G401 (cell line): ENCODE measurements at regions of chr11 and their contacts with region 1.

Region 1: GRCh38 chr11:123116486-123116885 is 54.5 kb upstream of the HSPA8 start:
- DNase-seq: no peak

Region 2: DNA sequence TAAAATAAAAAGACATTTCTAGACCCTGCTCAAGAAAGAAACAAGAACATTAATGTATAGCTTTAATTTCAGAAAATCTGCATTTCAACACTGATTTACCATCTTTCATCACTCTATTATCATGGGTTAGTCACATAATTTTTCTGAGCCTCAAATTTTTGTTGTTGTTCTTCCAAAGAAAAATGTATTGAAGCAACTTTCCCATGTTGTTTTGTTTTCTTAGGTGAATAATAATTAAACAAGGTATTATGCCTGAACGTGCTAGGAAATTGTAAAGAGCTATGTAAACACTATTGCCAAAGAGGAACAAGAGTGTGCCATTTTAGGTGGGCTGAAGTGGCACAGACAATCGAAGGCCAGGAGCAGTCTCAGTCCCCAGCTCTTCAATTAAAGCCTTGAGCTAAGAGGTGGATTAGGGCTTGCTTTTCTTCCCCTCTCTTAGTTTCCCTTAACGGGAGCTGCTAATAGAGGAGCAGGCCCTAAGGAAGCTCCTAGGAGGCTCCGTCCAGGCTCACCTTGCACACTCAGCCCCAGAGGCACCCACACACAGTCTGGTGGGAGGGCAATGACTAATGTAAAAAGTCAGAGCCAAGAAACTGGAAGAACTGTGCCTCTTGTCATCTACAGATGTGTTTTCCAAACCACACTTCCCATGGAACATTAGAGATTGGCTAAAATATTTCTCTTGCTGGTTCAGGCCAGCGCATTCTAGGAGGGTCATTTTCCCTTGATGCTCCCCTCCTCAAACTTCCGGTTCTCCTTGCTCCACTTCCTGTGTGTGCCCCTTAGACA is 469.7 kb before region 1 on chr11:
- in situ Hi-C with region 1: no loop called
- DNase-seq: no peak

Region 3: DNA sequence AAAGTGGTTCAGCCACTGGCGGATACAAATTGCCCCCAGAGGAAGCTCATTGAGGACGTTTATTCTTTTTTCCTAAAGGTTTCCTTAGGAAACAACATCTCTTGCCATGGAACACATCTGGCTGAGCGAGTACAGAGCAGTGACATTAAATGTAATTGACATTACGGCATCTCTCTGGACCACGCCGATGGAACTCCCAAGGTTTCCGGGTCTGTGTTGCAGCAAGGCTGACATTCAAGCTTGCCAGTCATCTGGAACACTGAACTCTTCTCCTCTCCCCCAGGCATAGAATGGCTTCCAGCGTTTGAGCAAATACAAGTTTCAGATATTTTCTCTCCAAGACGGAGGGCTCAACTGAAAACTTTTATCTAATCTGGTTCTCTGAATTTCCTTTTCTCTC is 36.5 kb after region 1 on chr11:
- in situ Hi-C with region 1: no loop called
- DNase-seq: no peak

Region 4: DNA sequence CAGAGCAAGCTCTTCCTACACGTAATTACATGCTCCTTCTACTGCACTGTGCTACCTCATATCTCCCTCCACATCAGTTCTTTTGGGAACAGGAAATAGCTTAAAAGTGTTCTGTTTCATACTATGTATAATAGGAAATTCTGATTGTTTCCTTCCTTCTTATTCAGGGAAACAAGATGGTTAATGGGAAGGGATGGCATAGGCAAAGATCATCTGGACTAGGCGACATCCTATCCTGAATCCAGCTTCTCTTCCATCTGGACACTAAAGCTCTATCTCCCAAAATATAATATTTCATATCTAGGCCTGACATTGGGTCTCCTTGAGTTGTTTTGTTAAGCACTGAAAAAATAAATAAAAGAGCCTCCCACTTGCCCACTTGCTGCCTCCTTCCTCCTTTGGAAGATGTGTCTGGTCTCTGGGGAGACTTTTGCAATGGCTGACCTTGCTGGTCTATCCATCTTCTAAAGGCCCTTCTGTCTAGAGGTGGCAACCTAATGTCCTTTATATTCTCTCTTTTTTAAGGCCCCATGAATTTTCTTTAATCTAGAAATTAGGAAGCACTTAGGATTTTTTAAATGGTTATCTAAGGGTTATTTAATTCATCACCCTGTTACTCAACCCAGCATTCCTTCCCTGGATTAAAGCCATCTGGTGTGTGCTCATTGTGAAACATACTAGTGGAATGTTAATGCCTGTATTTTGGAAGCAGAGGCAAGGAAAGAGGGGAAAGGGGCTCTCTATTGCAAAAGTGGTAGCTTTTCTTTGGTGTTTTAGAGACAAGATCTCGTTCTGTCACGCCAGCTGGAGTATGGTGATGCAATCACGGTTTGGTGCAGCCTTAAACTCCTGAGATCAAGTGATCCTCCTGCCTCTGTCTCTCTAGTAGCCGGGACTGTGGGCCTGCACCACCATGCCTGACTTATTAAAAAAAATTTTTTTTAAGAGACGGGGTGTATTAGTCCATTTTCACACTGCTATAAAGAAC is 58.0 kb after region 1 on chr11:
- in situ Hi-C with region 1: loop called (anchors 5 kb)
- DNase-seq: no peak